Posterior vena cava (tissue), 2 donors: ENCODE measurements at regions of chr20 and their contacts with region 1.

Region 1: GRCh38 chr20:49747707-49748524 is 34.2 kb upstream of the B4GALT5 start:
- DNase-seq: peak; percentile 97

Region 2: GRCh38 chr20:49781676-49782075 is 33.8 kb after region 1 on chr20:
- intact Hi-C with region 1: loop called in 1 of 2 experiments (anchors 1 kb)
- DNase-seq: no peak

Region 3: DNA sequence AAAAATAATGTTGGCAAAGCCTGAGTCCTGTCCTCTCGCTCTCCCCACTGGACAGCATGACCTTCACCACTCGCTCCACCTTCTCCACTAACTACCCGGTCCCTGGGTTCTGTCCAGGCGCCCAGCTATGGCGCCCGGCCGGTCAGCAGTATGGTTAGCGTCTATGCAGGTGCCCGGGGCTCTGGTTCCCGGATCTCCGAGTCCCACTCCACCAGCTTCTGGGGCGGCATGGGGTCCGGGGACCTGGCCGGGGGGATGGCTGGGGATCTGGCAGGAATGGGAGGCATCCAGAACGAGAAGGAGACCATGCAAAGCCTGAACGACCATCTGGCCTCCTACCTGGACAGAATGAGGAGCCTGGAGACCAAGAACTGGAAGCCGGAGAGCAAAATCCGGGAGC is 208.8 kb after region 1 on chr20:
- intact Hi-C with region 1: no loop called
- DNase-seq: peak; percentile 62